AG04450 (cell line): ENCODE measurements at regions of chr7 and their contacts with region 1.

Region 1: GRCh38 chr7:92609921-92610518 is 19.8 kb upstream of the FAM133B start:
- DNase-seq: no peak
- H3K4me3 ChIP-seq: no peak overlapping the region
- H3K27ac ChIP-seq: no peak overlapping the region
- H3K27me3 ChIP-seq: no peaks in the 10 kb centered on the region
- CTCF ChIP-seq: peak; percentile 47

Region 2: DNA sequence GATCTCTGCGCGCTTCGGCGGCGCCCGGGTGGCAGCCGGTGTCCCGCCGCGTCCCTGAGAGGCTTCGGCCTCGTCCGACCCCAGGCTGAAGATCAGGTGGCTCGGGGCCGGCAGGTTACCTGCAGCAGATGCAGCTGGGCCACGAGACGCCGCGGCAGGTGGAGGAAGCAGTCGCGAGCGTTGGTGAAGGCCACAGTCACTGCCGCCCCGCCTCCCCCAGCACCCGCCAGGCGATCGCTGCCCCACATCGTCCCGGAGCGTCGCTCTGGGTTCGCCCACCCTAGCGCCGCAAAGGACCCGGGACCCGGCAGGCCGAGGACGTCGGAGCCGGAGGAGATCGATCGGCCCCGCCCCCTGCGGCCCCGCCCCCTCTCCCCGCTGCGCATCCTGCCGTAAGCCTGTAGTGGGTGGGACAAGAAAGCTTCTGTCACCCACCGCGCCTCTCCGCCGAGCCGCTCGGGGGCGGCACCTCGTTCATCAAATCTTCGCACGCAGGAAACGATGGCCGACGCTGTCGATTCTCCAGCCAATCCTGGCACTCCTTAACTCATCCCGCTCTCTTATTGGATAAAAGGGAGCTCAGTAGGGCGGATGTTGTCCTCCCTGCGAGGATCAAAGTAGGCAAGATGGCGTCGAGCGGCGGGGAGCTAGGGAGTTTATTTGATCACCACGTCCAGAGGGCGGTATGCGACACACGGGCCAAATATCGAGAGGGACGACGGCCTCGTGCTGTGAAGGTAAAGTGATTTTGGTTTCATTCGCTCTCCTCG is 81.6 kb before region 1 on chr7 and contains the starts of genes PEX1 and RBM48:
- CTCF ChIA-PET with region 1: interaction called, 22 read pairs
- POLR2A ChIA-PET with region 1: interaction called, 3 read pairs
- DNase-seq: peak; percentile 97
- H3K4me3 ChIP-seq: peak within 1 kb of the TSS; percentile 94
- H3K27ac ChIP-seq: peak within 1 kb of the TSS; percentile 85
- H3K27me3 ChIP-seq: no peaks in the 10 kb centered on the region
- CTCF ChIP-seq: peak; percentile 2; the same call in 1 of the 2 replicates
- polyA plus RNA-seq, gene PEX1: 13.8 and 20.9 TPM in 2 replicates
- polyA plus RNA-seq, gene RBM48: 5.7 and 7.3 TPM in 2 replicates

Region 3: GRCh38 chr7:92567460-92567859 is 42.6 kb before region 1 on chr7:
- CTCF ChIA-PET with region 1: interaction called, 4 read pairs
- POLR2A ChIA-PET with region 1: interaction called, 10 read pairs
- DNase-seq: no peak
- H3K4me3 ChIP-seq: no peak overlapping the region
- H3K27ac ChIP-seq: no peak overlapping the region
- H3K27me3 ChIP-seq: no peaks in the 10 kb centered on the region
- CTCF ChIP-seq: no peak

Region 4: DNA sequence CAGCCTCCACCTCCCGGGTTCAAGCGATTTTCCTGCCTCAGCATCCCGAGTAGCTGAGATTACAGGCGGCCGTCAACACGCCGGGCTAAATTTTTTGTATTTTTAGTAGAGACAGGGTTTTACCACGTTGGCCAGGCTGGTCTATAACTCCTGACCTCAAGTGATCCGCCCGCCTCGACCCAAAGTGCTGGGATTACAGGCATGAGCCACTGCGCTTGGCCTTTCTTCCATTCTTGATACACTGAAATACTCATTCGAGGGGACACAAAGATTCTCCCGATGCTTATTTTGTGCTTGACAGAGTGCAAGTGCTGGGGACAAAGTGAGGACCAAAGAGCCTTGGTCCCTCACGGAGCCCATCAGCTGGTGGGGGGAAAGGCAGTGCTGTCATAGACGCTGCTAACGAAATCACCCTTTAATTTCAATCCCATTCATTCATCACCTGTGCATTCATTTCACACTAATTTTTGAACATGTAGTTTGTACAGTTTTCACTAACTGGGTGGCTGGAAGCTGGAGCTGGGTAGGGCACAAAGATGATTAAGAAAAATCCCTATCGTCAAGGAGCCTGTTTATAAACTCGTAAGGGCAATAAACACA is 19.2 kb before region 1 on chr7:
- CTCF ChIA-PET with region 1: interaction called, 18 read pairs
- POLR2A ChIA-PET with region 1: interaction called, 15 read pairs
- DNase-seq: no peak
- H3K4me3 ChIP-seq: peak overlapping the region; percentile 96
- H3K27ac ChIP-seq: no peak overlapping the region
- H3K27me3 ChIP-seq: no peaks in the 10 kb centered on the region
- CTCF ChIP-seq: no peak

Region 5: DNA sequence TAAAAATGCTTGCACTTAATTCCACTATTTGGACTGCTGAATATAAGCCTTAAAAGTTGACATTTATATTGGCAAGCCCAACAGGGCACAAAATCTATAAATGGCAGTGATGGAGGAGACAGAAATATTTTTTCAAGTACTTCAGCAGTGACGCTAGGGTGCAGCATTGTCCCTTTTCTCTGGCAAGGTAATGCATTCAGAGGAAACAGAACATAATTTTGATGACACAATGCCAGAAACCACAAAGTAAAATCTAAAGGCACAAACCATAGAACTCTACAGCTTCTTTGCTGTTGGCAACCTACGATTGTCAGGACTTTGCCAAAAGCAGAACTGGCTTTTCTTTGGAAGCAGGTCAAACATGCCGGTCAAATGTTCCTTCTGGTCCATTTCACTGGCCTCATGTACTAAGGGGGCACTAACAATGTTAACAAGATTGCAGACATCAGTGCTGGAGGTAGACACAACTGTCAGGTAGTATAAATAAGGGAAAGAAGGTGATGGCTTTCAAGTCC is 11.1 kb after region 1 on chr7:
- CTCF ChIA-PET with region 1: interaction called, 13 read pairs
- POLR2A ChIA-PET with region 1: no interaction called
- DNase-seq: peak; percentile 85
- H3K4me3 ChIP-seq: no peak overlapping the region
- H3K27ac ChIP-seq: no peak overlapping the region
- H3K27me3 ChIP-seq: no peaks in the 10 kb centered on the region
- CTCF ChIP-seq: peak; percentile 77

Region 6: GRCh38 chr7:92731335-92732063 is 121.5 kb after region 1 on chr7:
- CTCF ChIA-PET with region 1: no interaction called
- POLR2A ChIA-PET with region 1: no interaction called
- DNase-seq: no peak
- H3K4me3 ChIP-seq: no peak overlapping the region
- H3K27ac ChIP-seq: no peak overlapping the region
- H3K27me3 ChIP-seq: no peaks in the 10 kb centered on the region
- CTCF ChIP-seq: no peak